HCT116 (cell line): ENCODE measurements at regions of chr15 and their contacts with region 1.

Region 1: GRCh38 chr15:96273317-96274086 is 57.0 kb upstream of the NR2F2 start:
- DNase-seq: peak; percentile 100
- ATAC-seq: peak; percentile 92
- H3K4me3 ChIP-seq: peak overlapping the region in 1 of 2 experiments; percentile 44; a peak in 2 of 4 replicates
- H3K27ac ChIP-seq: peak overlapping the region; percentile 83
- H3K4me1 ChIP-seq: peaks cover 63 to 88% of the 10 kb centered on the region in 2 experiments
- H3K27me3 ChIP-seq: no peaks in the 10 kb centered on the region
- CTCF ChIP-seq: no peak
- POLR2A ChIP-seq: no peak
- RAD21 ChIP-seq: peak; percentile 36; the same call in 1 of the 2 replicates

Region 2: GRCh38 chr15:95557226-95558046 is 716.1 kb before region 1 on chr15:
- CTCF ChIA-PET with region 1: no interaction called
- POLR2A ChIA-PET with region 1: no interaction called
- RAD21 ChIA-PET with region 1: no interaction called
- intact Hi-C with region 1: loop called (anchors 10 kb)
- DNase-seq: peak; percentile 83
- ATAC-seq: peak; percentile 86
- H3K4me3 ChIP-seq: peak overlapping the region in 1 of 2 experiments; percentile 41; a peak in 2 of 4 replicates
- H3K27ac ChIP-seq: peak overlapping the region; percentile 30
- H3K4me1 ChIP-seq: peaks cover 29 to 41% of the 10 kb centered on the region in 2 experiments
- H3K27me3 ChIP-seq: no peaks in the 10 kb centered on the region
- CTCF ChIP-seq: no peak
- POLR2A ChIP-seq: no peak
- RAD21 ChIP-seq: peak; percentile 15; the same call in 1 of the 2 replicates

Region 3: GRCh38 chr15:96320703-96321638 is 47.5 kb after region 1 on chr15:
- CTCF ChIA-PET with region 1: no interaction called
- POLR2A ChIA-PET with region 1: no interaction called
- RAD21 ChIA-PET with region 1: no interaction called
- intact Hi-C with region 1: no loop called
- DNase-seq: no peak
- ATAC-seq: no peak
- H3K4me3 ChIP-seq: no peak overlapping the region
- H3K27ac ChIP-seq: no peak overlapping the region
- H3K4me1 ChIP-seq: peaks cover 14 to 26% of the 10 kb centered on the region in 2 experiments; a peak in 3 of 4 replicates
- H3K27me3 ChIP-seq: no peaks in the 10 kb centered on the region
- CTCF ChIP-seq: no peak
- POLR2A ChIP-seq: no peak
- RAD21 ChIP-seq: no peak